Left ventricle myocardium inferior (tissue), 1 donor: ENCODE measurements at regions of chr1 and their contacts with region 1.

Region 1: DNA sequence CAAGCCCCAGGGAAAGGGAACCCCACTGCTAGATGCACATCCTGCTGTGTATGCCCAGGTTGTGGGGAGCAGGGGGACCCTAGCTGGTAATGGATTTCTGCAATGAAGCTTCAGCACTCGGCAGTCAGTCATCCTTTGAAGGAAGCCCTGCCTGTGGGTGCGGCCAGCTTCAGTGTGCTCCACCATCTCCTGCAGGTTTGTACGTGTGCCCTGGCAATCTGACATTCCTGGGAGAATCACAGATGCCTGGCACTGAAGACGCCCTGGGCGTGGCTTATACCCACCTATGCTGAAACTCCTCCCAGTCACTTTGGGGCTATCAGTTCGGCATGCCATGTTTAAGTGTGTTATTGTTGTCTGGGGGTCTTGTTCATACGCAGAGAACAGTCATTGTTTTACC is 6.8 kb downstream of the SPRR5 start:
- DNase-seq: no peak
- H3K4me3 ChIP-seq: no peak overlapping the region
- H3K27ac ChIP-seq: no peak overlapping the region
- H3K4me1 ChIP-seq: no peaks in the 10 kb centered on the region
- H3K27me3 ChIP-seq: peaks cover 4% of the 10 kb centered on the region
- CTCF ChIP-seq: no peak

Region 2: GRCh38 chr1:152983743-152984142 is 30.0 kb after region 1 on chr1 and contains the start of gene SPRR1A:
- intact Hi-C with region 1: loop called (anchors 2 kb)
- DNase-seq: no peak
- H3K4me3 ChIP-seq: no peak within 1 kb of the TSS
- H3K27ac ChIP-seq: no peak within 1 kb of the TSS
- H3K4me1 ChIP-seq: no peaks in the 10 kb centered on the region
- H3K27me3 ChIP-seq: peaks cover 27% of the 10 kb centered on the region
- CTCF ChIP-seq: no peak
- total RNA-seq, gene SPRR1A: not detected

Region 3: DNA sequence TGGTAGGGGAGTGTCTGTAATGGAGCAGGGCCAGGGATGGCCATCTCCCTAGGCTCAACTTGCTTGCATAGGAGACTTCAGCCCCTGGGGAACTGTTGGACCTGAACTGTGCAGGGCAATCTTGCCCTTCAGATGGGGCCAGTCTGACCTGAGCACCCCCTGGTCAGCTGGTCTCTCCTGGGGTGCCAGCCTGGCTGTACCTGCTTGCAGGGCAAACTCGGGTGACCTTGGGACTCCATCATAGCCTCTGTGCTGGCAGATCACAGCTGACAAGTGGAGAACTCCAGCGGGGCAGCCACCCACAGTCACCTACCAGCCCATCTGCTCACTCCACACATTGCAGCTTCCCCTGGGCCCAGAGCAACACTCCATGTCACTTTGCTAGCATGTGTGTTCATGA is 95.5 kb after region 1 on chr1:
- intact Hi-C with region 1: no loop called
- DNase-seq: no peak
- H3K4me3 ChIP-seq: no peak overlapping the region
- H3K27ac ChIP-seq: no peak overlapping the region
- H3K4me1 ChIP-seq: no peaks in the 10 kb centered on the region
- H3K27me3 ChIP-seq: no peaks in the 10 kb centered on the region
- CTCF ChIP-seq: no peak